ENCODE measurements at regions of chr22 and their contacts with region 1.

Region 1: DNA sequence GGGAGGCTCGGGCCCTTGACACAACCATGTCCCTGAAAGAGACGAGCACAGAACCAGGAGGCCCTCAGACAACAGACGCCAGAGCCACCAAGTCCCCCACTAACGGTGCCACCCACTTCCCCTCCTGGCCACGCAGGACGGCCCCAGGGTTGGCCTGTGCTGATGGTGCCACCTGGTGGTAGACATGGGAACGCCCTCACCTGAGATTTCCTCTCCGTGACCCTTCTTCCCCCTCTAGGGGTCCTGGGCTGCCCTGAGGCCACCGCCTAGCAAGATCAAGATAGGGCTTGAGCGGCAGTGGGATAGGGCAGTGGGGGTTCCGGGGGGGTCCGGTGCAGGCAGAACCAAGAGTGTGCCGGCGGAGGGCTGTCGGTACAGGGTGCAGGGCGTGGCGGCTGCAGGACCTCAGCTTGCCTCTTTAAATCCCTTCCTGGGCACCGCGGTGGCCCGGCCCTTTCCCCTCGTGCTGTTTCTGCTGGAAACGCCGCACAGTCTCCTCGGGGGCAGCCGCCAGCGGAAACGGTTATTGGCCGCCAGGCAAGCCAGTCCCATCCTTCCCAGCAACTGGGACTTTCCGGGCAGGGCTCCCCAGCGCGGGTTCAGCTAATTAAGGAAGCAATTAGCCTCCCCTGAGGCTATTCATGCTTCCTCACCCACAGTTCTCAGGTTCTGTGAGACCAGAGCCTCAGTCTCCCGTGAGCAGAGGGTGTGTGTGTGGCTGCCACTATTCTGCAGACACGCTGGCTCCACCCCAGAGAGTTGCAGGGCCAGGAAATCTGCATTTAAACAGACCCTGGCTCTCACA is 5.5 kb upstream of the NFAM1 start:
- DNase-seq: peak; percentile 86
- CTCF ChIP-seq: peak; percentile 95

Region 2: DNA sequence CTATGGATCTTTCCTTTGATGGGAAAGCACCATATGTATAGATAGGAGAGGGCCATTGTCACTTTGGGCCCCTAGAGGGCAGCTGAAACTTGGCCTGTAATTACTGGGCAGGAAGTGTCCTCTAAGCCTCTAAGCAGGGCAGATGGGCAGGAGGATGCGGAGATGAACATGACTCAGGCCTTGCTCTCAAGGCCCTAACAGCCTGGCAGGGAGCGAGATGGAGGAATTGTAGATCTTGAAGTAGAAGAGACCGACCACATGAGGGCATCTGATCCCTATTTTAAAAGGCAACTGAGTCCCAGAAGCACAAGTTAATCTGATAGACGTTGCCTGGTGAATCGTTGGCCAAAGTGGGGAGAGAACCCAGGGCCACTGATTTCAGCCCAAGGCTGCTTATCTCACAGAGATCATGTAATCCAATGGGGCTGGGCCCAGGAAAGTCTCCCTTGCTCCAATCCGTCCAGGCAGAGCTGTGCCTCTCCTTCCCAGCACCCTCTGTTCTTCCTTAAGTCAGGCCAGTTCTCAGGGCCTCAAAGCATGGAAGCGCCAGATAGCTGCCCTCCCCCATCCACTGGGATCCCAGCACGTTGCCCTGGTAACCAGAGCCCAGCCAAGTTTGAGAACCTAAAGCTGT is 471.0 kb before region 1 on chr22:
- CTCF ChIA-PET with region 1: interaction called, 18 read pairs
- POLR2A ChIA-PET with region 1: no interaction called
- DNase-seq: peak; percentile 63
- CTCF ChIP-seq: peak; percentile 34

Region 3: GRCh38 chr22:42169055-42169469 is 268.6 kb before region 1 on chr22:
- CTCF ChIA-PET with region 1: interaction called, 80 read pairs
- POLR2A ChIA-PET with region 1: no interaction called
- DNase-seq: peak; percentile 86
- CTCF ChIP-seq: peak; percentile 92

Region 4: DNA sequence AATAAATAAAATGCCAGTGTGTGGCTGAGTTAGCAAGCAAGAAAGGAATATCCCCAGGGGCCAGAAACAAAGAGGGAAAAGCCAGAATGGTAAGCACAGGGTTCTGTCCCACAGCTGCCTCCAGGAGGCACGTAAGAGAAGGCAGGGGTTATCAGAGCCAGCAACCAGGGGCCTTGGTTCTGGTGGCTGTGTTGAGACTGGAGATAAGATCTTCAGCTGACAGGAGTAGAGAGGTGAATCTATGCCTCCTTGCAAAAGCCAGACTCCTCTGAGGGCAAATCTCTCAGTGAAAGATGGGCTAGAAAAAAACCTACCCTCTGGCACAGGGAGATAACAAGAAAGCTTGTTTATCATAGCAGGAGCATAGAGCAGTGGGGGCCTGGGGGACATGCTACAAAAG is 24.3 kb after region 1 on chr22:
- CTCF ChIA-PET with region 1: interaction called, 25 read pairs
- POLR2A ChIA-PET with region 1: interaction called, 13 read pairs
- DNase-seq: no peak
- CTCF ChIP-seq: no peak